Common myeloid progenitor, CD34-positive (primary cell): ENCODE measurements at regions of chr7 and their contacts with region 1.

Region 1: GRCh38 chr7:128455551-128456254 is at the start of gene HILPDA:
- DNase-seq: peak; percentile 85 to 92 (median 92)
- H3K4me3 ChIP-seq: peak within 1 kb of the TSS; percentile 77 to 98 (median 88)
- H3K27ac ChIP-seq: peak within 1 kb of the TSS in 1 of 2 experiments; percentile 85
- H3K4me1 ChIP-seq: peaks cover 7 to 32% (median 21%) of the 10 kb centered on the region in 4 experiments
- H3K27me3 ChIP-seq: peaks cover 0 to 4% (median 0%) of the 10 kb centered on the region in 5 experiments

Region 2: DNA sequence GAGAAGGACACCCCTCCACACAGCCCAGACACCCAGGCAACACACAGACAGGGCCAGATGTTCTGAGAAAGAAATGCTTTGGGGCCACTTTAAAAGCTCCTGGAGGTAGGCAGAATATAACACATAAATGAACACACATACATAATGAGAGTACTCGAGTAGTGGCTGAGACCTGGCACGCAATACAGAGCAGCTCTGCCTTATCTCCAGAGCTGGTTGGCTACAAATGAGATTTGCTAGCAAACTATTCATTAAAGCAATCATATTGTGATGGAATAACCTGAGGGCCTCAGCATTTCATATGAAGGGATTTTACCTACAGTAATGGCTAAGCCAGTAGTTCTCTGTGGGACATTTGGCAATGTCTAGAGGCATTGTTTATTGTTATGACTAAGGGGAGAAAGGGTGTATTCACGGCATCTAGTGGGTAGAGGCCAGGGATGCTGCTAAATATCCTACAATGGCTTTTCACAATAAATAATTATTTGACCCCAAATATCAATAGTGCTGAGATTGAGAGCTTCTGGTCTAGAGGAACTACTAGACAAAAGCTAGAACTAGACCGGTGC is 40.4 kb before region 1 on chr7:
- CTCF ChIA-PET with region 1: interaction called, 37 read pairs
- POLR2A ChIA-PET with region 1: no interaction called
- DNase-seq: no peak
- H3K4me3 ChIP-seq: no peak overlapping the region
- H3K27ac ChIP-seq: no peak overlapping the region
- H3K4me1 ChIP-seq: peaks cover 4 to 6% (median 4%) of the 10 kb centered on the region in 4 experiments
- H3K27me3 ChIP-seq: no peaks in the 10 kb centered on the region

Region 3: DNA sequence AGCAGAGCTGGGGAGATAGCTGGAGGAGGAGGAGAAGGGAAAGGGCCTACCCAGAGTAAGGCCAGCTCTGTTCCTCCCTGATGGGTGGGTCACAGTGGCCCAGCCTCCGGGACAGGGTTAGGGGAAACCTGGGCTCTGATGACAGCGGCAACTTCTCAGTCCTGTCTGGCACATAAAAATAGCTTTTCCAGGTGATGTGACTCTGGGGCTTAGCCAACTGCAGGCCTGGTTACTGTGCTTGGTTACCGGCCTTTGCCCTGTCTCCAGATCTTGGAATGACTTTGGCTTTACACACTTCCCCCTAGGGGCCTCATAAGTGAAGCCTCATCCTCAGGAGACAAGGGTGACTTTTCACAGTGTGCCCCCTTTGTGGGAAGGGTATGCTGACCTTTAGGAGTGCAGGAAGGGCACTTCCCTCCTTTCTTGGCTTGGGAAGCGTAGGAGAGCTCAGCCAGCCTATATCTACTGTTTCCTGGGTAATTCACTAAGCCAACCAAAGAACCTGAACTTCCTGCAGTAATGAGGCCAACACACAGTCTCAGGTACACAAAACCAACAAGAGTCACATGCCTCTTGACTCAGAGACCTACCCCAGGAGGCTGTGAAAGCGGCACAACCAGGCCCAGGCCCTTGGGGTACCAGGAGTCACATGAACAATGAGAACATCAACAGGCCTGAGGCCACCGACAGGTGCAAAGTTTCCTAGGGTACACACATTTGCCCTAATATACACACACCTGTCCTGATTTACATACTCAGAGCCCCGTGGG is 11.7 kb before region 1 on chr7:
- CTCF ChIA-PET with region 1: interaction called, 22 read pairs
- POLR2A ChIA-PET with region 1: no interaction called
- DNase-seq: no peak
- H3K4me3 ChIP-seq: no peak overlapping the region
- H3K27ac ChIP-seq: no peak overlapping the region
- H3K4me1 ChIP-seq: no peaks in the 10 kb centered on the region
- H3K27me3 ChIP-seq: no peaks in the 10 kb centered on the region

Region 4: GRCh38 chr7:128770233-128770632 is 314.5 kb after region 1 on chr7:
- CTCF ChIA-PET with region 1: no interaction called
- POLR2A ChIA-PET with region 1: no interaction called
- DNase-seq: no peak
- H3K4me3 ChIP-seq: no peak overlapping the region
- H3K27ac ChIP-seq: no peak overlapping the region
- H3K4me1 ChIP-seq: no peaks in the 10 kb centered on the region
- H3K27me3 ChIP-seq: no peaks in the 10 kb centered on the region